ENCODE measurements at regions of chr9 and their contacts with region 1.

Region 1: GRCh38 chr9:111691672-111692329 is 30.4 kb downstream of the GNG10 start:
- DNase-seq: no peak
- H3K4me3 ChIP-seq: no peak overlapping the region
- CTCF ChIP-seq: peak; percentile 7

Region 2: DNA sequence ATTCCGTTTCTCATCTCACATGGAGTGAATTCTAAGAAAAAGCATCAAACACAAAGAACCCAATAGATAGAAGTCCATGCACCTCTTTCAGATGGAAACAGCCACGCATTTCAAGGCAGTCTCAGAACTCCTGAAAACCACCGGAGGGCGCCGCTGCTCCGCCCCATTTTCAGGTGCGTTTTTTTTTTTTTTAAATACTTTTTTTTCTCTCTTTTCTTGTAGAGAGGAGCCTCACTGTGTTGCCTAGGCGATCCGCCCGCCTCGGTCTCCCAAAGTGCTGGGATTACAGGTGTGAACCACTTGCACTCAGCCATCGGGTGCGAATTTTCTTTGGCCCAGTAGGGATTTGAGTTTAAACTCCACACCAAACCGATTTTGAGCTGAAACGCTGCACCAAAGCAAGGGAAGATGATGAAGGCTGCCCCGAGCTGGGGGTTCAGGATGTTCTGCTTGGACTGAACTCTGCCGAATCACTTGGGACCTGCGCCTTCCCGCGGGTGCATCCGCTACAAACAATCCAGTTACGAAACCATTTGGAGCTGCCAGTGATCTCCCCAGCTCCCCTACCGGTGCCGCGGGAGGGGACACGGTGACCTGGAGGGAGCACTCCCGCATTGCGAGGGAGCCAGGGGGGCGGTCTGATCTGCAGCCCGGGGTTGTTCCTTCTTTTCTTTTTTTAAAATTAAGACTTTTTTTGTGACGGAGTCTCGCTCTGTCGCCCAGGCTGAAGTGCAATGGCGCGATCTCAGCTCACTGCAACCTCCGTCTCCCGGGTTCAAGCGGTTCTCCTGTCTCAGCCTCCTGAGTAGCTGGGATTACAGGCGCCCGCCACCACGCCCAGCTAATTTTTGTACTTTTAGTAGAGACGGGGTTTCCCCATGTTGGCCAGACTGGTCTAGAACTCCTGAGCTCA is 93.7 kb before region 1 on chr9:
- CTCF ChIA-PET with region 1: interaction called, 14 read pairs
- POLR2A ChIA-PET with region 1: no interaction called
- DNase-seq: no peak
- H3K4me3 ChIP-seq: peak overlapping the region; percentile 72
- CTCF ChIP-seq: peak; percentile 59

Region 3: GRCh38 chr9:111631071-111631971 is 60.5 kb before region 1 on chr9 and contains the start of gene DNAJC25:
- CTCF ChIA-PET with region 1: no interaction called
- POLR2A ChIA-PET with region 1: no interaction called
- DNase-seq: peak; percentile 94
- H3K4me3 ChIP-seq: peak within 1 kb of the TSS; percentile 93
- CTCF ChIP-seq: peak; percentile 6

Region 4: DNA sequence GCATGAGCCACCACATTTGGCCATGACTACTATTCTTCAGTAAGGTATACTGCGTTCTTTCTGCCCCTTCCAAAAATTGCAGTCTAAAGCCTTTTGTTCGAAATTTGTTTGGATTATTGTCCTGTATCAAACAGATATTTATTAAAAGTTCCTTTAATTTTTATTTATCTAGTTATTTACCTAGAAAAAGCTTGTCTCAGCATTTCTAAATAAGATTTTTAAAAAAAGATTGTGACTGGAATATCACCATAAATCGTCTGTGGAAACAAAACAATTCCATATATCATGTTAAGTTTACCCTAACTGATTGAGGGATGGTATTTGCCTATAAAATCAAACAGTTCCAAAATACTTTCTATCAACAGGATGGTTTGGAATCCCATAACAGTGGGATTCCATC is 15.7 kb before region 1 on chr9:
- CTCF ChIA-PET with region 1: interaction called, 12 read pairs
- POLR2A ChIA-PET with region 1: no interaction called
- DNase-seq: no peak
- H3K4me3 ChIP-seq: no peak overlapping the region
- CTCF ChIP-seq: no peak

Region 5: GRCh38 chr9:111704503-111704902 is 12.7 kb after region 1 on chr9:
- CTCF ChIA-PET with region 1: interaction called, 16 read pairs
- POLR2A ChIA-PET with region 1: no interaction called
- DNase-seq: no peak
- H3K4me3 ChIP-seq: no peak overlapping the region
- CTCF ChIP-seq: no peak